Aorta (tissue), 5 donors: ENCODE measurements at regions of chr11 and their contacts with region 1.

Region 1: DNA sequence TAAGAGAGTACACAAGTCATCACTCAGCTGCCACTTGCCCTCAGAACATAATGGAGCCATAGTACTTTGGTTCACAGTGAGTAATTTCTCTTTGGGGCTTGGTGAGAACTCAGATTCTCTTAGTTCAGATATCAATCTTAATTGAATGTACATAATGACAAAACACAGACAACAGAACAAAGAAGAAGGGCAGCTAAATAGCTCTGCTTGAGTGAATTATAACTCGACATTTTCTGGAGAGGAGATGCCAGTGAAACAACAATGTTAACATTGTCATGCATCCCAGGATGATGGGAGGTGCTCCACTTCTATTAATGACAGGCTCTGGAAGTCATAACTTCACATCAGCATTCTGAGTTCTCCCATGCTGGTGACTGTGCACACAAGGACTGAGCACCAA is 508.1 kb downstream of the TMEM135 start:
- DNase-seq: no peak
- ATAC-seq: no peak
- H3K4me3 ChIP-seq: no peak overlapping the region
- H3K27ac ChIP-seq: no peak overlapping the region
- H3K4me1 ChIP-seq: no peaks in the 10 kb centered on the region
- H3K27me3 ChIP-seq: no peaks in the 10 kb centered on the region

Region 2: GRCh38 chr11:87529486-87529885 is 16.4 kb before region 1 on chr11:
- intact Hi-C with region 1: loop called in 1 of 2 experiments (anchors 1 kb)
- DNase-seq: no peak
- ATAC-seq: no peak
- H3K4me3 ChIP-seq: no peak overlapping the region
- H3K27ac ChIP-seq: no peak overlapping the region
- H3K4me1 ChIP-seq: no peaks in the 10 kb centered on the region
- H3K27me3 ChIP-seq: peaks cover 0 to 3% of the 10 kb centered on the region in 2 donors